Right ventricle myocardium inferior (tissue), 1 donor: ENCODE measurements at regions of chr10 and their contacts with region 1.

Region 1: GRCh38 chr10:7121154-7121810 is 289.6 kb downstream of the SFMBT2 start:
- DNase-seq: no peak
- ATAC-seq: no peak

Region 2: DNA sequence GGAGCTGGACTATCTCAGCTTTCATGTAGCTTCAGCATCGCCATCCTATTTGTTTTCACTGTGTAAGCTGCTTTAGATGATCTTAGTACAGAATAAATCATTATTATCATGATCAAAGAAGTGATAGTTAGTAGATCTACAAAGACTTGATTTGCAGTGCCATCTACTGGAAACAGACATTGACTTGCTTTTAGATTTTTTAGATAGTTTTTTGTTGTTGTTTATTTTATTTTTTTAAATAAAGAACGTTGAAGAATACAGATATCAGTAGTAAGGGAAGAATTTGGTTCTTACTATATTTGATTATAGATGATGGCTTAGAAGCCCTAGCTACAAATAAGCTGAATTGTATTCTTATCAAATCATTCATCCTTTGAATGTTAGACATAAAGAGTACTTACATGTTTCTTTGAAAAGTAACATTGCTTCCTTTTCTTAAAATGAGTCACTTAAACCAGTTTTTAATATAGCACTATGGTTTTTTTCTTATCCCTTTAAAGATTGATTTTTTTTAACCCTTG is 295.9 kb after region 1 on chr10:
- intact Hi-C with region 1: loop called (anchors 2 kb)
- DNase-seq: no peak
- ATAC-seq: no peak